Activated CD4-positive, alpha-beta T cell treated with anti-CD3 and anti-CD28 coated beads, Interleukin-2, amount 10 ng/mL, durations not matched to agents 7 days and 5 days (primary cell): ENCODE measurements at regions of chr5 and their contacts with region 1.

Region 1: DNA sequence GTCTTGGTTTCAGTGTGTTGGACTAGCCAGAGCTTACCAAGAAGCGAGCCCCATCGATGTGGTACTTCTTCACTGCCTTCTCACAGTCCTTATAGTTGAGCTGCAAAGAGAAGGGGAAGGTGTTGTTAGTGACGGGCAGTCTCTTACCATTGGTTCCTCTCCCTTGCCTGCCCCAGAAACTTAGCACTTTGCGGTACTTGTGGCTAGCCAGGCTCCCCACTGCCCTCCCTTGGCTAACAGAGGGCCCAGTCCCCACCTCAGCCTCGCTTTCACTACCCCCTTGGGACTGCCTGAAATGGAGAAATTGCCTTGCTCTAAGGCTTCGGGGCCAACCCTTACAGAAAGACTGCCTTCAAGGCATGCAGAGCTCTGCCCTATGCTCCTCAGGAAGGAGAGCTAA is 4.3 kb downstream of the LCP2 start:
- DNase-seq: peak; percentile 60
- H3K4me3 Mint-ChIP-seq: peak overlapping the region; percentile 96
- H3K27ac Mint-ChIP-seq: peak overlapping the region; percentile 79
- H3K4me1 Mint-ChIP-seq: peaks cover 71% of the 10 kb centered on the region
- H3K27me3 Mint-ChIP-seq: no peaks in the 10 kb centered on the region

Region 2: GRCh38 chr5:170333161-170333910 is 40.1 kb after region 1 on chr5:
- CTCF ChIA-PET with region 1: interaction called, 15 read pairs
- POLR2A ChIA-PET with region 1: interaction called, 22 read pairs
- DNase-seq: peak; percentile 65
- H3K4me3 Mint-ChIP-seq: peak overlapping the region; percentile 66
- H3K27ac Mint-ChIP-seq: no peak overlapping the region
- H3K4me1 Mint-ChIP-seq: peaks cover 28% of the 10 kb centered on the region
- H3K27me3 Mint-ChIP-seq: no peaks in the 10 kb centered on the region

Region 3: DNA sequence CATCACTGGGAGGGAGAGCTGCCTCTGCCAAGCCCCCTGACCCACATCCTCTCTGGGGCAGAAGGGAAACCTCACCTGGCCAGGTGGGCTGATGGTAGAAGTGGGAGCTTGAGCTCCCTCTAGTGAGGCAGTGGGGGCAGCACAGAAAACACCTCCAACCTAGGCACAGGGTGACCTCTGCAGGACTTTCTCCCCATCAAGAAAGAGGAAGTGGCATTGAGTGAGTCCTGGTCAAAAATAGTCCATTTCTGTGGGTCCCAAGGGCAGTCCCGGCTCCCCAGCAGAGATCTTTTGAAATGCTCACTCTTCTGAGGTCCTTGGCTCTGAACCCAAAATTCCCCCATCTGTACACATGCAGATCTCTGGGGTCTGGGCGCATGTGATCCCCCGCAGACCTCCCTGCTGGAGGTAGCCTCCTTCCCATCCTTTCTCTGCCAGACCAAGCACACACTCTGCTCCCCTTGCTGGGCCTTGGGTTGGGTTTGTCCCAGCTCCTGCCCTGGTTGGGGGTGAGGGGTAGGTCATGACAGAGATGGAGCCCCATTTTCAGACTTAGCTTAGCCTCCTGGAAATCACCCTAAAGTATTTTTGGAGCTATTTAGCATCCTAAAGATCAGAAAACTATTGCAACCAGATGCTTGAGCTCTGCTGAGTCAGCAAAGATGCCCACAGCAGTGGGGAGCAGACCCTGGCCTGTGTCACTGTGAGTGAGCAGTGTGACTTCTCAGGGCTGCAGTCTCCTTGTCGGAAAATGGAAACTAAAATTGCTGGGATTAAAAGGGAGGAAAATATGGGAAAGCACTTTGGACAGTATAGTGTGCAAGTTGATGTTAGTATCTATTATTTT is 45.9 kb after region 1 on chr5:
- CTCF ChIA-PET with region 1: interaction called, 15 read pairs
- POLR2A ChIA-PET with region 1: interaction called, 22 read pairs
- DNase-seq: peak; percentile 72
- H3K4me3 Mint-ChIP-seq: no peak overlapping the region
- H3K27ac Mint-ChIP-seq: peak overlapping the region; percentile 25
- H3K4me1 Mint-ChIP-seq: peaks cover 39% of the 10 kb centered on the region
- H3K27me3 Mint-ChIP-seq: peaks cover 2% of the 10 kb centered on the region